Activated CD4-positive, alpha-beta memory T cell treated with anti-CD3 and anti-CD28 coated beads for 36 hours (primary cell): ENCODE measurements at regions of chr1 and their contacts with region 1.

Region 1: DNA sequence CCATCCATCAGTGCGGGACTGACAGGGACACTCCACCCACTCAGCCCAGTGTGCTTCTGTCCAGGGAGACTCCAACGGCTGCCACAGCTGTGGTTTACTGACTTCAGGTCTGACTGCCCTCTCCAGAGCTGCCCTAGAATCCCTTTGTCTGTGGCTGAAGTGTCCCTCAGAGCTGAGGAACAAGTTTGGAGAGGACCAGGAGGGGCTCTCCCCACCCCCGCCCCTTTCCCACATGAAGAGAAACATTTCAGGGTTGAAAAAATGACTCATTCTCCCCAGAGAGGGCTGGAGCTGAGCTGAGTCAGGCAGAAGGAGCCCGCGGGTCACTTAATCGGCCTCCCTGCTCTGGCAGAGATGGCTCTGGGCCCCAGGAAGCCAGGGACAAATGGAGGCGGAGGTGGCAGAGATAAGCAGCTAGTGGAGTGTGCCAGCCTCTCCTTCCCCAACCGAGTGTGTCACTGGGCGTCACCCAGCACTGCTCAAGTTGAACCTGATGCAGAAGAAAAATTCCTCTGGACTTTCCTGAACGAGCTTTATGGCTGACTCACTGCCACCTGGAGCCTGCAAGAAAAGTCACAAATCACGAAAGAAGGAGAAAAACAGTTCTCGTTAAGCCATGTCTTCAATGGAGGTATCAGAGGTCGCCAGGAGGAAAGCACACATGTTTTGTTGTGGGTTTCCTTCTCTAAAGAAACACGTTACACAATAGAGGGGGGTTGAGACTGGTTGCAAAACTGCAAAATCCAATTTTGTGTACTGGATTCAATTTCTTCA is 34.3 kb upstream of the ECE1 start:
- DNase-seq: peak; percentile 90
- H3K4me3 Mint-ChIP-seq: peak overlapping the region; percentile 45
- H3K27ac Mint-ChIP-seq: peak overlapping the region; percentile 90
- H3K4me1 Mint-ChIP-seq: peaks cover 81% of the 10 kb centered on the region
- H3K27me3 Mint-ChIP-seq: no peaks in the 10 kb centered on the region

Region 2: GRCh38 chr1:21302747-21303715 is 21.5 kb before region 1 on chr1:
- CTCF ChIA-PET with region 1: interaction called, 5 read pairs
- POLR2A ChIA-PET with region 1: interaction called, 18 read pairs
- intact Hi-C with region 1: no loop called
- DNase-seq: no peak
- H3K4me3 Mint-ChIP-seq: no peak overlapping the region
- H3K27ac Mint-ChIP-seq: peak overlapping the region; percentile 46
- H3K4me1 Mint-ChIP-seq: peaks cover 81% of the 10 kb centered on the region
- H3K27me3 Mint-ChIP-seq: no peaks in the 10 kb centered on the region

Region 3: GRCh38 chr1:21344750-21345443 is 20.3 kb after region 1 on chr1:
- CTCF ChIA-PET with region 1: interaction called, 11 read pairs
- POLR2A ChIA-PET with region 1: interaction called, 22 read pairs
- intact Hi-C with region 1: loop called (anchors 1 kb)
- DNase-seq: peak; percentile 45
- H3K4me3 Mint-ChIP-seq: peak overlapping the region; percentile 91
- H3K27ac Mint-ChIP-seq: peak overlapping the region; percentile 94
- H3K4me1 Mint-ChIP-seq: peaks cover 40% of the 10 kb centered on the region
- H3K27me3 Mint-ChIP-seq: no peaks in the 10 kb centered on the region